Lower leg skin (tissue), 4 donors: ENCODE measurements at regions of chr4 and their contacts with region 1.

Region 1: DNA sequence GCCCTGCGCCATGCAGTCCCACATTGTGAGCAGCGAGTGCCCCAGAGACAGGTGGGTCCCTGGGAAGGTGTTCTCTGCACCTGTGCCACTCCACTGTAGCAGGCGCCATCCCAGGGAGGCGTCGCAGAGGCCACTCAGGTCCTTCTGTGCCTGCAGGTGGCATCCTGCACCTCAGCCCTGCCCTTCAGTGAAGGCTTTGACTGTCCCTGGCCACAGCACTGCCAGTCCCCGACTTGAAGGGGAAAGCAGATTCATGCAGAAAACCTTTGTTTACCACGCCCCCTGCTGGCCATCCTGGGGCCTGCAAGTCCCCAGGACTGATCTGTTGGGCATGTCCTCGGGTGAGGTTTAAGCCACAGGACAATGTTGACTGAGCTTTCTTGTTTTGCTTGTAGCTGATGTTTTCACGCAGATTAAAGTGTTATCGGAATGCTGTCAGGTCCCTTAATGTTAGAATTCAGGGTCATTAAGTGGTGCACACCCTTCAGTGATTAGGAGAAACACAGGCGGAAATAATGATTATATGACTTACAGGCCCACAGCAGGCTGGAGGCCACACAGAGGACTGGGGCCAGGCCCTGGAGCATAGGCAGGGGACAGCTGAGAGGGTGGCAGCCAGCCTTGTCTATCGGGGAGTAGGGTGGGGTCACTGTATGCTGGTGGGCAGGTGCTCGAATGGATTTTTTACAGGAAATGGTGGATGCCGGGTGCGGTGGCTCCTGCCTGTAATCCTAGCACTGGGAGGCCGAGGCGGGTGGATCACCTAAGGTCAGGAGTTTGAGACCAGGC is 5.0 kb downstream of the TACC3 start:
- DNase-seq: peak; percentile 88 to 97
- H3K4me3 ChIP-seq: no peak overlapping the region
- CTCF ChIP-seq: peak in 1 of 3 donors; percentile 87
- POLR2A ChIP-seq: no peak

Region 2: DNA sequence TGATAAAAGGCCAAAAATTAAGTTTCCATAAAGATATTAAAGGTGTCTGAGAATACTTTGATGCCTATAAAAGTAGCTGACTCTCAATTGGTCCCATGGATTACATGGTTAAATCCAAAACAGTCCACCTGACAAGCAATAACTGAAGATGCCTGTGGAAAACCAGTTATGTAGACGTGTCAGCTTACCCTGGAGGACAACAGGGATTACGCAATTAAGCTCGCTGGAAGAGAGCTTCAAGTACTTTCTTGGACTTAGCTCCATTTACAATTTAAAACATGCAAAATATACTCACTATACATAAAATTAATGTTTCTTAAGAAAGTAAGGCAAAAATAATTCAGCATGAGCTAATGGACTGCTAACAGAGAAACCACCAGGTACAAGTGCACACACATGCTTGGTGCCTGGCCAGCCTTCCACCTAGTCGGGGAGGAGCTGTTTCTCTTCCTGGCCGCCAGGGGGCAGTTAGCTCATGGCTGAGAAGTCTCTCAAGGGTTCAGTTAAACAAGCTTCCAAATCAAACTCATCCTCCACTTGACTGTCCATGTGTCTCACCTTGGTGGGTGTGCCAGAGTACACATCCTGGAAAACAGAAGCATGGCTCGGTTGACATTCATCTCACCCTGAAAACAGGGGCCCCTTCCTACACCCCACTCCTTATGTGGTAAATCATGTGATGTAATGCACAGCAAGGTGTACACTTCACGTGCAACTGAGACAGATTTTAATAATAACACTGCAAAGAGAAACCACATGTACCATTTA is 33.0 kb before region 1 on chr4:
- intact Hi-C with region 1: loop called (anchors 5 kb)
- DNase-seq: peak in 1 of 2 donors; percentile 59
- H3K4me3 ChIP-seq: no peak overlapping the region
- CTCF ChIP-seq: peak in 1 of 3 donors; percentile 73
- POLR2A ChIP-seq: no peak

Region 3: DNA sequence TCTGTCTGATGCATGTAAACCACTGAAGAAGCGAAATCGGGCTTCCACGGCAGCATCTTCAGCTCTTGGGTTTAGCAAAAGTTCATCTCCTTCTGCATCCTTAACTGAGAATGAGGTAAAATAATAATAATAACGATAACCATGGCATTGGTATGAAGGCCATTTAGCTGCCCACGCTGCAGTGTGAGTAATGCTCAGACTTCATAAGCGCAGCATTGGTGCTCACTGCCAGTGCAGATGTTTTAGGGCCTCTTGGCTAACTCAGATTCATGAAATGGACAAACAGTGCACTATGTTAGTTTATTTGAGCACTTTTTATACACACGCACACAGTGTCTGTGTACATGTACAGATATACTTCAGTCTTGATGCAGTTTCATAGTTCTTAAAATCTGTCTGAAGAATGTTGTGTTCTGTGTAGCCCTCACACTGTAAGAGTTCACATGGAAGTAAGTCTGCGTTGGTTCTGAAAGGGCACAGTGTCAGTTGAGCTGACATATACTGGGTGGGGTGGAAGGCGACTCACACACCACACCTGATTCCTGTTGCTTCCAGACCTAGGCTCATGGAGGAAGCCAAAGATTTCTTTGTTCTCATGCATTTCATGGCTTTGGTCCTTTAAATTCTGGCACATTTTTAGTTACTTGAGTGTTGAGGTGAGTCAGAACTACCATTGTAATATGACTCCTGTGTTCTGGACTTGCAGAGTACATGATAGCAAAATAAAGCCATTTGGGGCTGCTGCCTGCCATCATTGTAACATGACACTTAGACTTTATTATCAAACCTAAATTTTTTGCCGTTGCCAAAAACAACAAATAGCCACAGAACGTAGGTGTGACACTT is 213.5 kb after region 1 on chr4:
- intact Hi-C with region 1: no loop called
- DNase-seq: no peak
- H3K4me3 ChIP-seq: no peak overlapping the region
- CTCF ChIP-seq: no peak
- POLR2A ChIP-seq: no peak